ENCODE measurements at regions of chr15 and their contacts with region 1.

Region 1: GRCh38 chr15:91706322-91707032 is 147.0 kb upstream of the SLCO3A1 start:
- DNase-seq: peak; percentile 81
- H3K4me3 Mint-ChIP-seq: no peak overlapping the region
- H3K27ac Mint-ChIP-seq: no peak overlapping the region
- H3K4me1 Mint-ChIP-seq: peaks cover 15% of the 10 kb centered on the region
- H3K27me3 Mint-ChIP-seq: peaks cover 9% of the 10 kb centered on the region
- CTCF ChIP-seq: peak; percentile 80

Region 2: DNA sequence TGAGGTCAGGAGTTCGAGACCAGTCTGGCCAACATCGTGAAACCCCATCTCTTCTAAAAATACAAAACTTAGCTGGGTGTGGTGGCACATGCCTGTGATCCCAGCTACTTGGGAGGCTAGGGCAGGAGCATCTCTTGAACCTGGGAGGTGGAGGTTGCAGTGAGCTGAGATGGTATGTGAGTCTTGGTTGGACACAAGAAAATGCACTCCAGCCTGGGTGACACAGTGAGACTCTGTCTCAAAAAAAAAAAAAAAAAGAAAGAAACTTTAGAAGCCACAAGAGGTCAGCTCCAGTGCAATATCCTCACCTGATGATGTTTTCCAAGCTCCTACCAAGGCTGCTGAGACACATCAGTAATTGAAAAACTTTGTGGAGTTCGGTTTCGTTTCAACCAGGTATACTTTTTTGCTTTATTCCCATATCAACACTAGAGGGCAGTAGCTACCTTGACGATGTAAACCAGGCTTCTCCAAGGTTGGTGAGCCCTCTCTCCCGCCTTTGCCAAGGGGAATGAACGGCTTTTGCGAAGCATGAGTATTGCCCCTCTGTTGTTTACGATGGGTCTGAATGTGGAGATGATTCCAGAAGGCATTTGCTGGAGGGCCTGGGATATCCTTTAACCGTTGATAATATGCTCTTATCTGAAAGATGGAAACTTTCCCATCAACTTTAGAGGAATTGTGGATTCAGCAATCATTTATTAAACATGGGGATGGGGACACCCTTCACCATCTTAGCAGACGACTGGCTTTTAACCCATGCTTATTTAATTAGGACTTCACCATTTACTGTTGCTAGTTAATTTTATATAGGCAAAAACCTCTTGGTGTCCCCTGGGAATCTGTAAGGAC is 403.7 kb before region 1 on chr15:
- CTCF ChIA-PET with region 1: interaction called, 20 read pairs
- POLR2A ChIA-PET with region 1: interaction called, 3 read pairs
- intact Hi-C with region 1: loop called (anchors 10 kb)
- DNase-seq: peak; percentile 77
- H3K4me3 Mint-ChIP-seq: no peak overlapping the region
- H3K27ac Mint-ChIP-seq: no peak overlapping the region
- H3K4me1 Mint-ChIP-seq: no peaks in the 10 kb centered on the region
- H3K27me3 Mint-ChIP-seq: peaks cover 81% of the 10 kb centered on the region
- CTCF ChIP-seq: peak; percentile 75

Region 3: DNA sequence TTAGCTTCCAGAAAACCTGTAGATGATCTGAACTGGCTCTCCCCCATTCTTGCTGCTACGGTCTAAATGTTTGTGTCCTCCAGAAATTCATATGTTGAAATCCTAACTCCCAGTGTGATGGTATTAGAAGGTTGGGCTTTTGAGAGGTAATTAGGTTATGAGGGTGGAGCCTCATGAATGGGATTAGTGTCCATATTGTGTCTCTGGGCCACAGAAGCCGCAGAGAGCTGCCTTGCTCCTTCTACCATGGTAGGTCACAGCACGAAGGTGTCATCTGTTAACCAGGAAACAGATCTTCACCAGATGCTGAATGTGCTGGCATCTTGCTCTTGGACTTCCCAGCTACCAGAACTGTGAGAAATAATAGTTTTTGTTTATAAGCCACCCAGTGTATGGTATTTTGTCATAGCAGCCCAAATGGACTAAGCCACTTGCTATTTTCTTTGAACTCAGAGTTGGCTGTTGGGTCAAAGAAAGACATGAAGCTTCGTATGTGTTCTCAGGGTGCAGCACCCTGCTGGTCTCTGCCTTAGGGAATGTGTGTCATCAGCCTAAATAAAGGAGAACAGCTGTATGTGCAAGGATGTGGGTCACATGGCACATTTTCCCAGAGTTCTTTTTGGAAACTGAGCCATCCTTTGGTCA is 170.5 kb before region 1 on chr15:
- CTCF ChIA-PET with region 1: no interaction called
- POLR2A ChIA-PET with region 1: no interaction called
- intact Hi-C with region 1: loop called (anchors 10 kb)
- DNase-seq: peak; percentile 42
- H3K4me3 Mint-ChIP-seq: no peak overlapping the region
- H3K27ac Mint-ChIP-seq: no peak overlapping the region
- H3K4me1 Mint-ChIP-seq: peaks cover 6% of the 10 kb centered on the region
- H3K27me3 Mint-ChIP-seq: no peaks in the 10 kb centered on the region
- CTCF ChIP-seq: no peak

Region 4: DNA sequence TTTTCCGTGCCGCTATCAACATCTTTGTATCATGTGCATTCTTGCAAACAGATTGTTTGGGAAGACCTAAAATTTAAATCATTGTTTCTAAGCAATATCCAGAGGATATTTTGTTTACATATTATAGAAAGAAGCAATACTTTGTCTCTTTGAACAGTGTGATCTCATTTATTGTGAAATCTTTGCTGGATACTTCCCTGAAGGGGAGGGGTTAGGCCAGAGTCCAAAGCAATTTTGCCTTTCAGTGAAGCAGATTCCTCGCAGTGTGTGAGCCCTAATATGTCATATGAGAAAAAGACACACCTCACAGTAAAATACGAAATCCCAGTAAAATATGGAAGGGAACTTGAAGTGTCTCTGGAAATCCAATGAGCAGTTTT is 11.7 kb before region 1 on chr15:
- CTCF ChIA-PET with region 1: interaction called, 46 read pairs
- POLR2A ChIA-PET with region 1: interaction called, 4 read pairs
- intact Hi-C with region 1: no loop called
- DNase-seq: peak; percentile 78
- H3K4me3 Mint-ChIP-seq: peak overlapping the region; percentile 71
- H3K27ac Mint-ChIP-seq: peak overlapping the region; percentile 94
- H3K4me1 Mint-ChIP-seq: peaks cover 10% of the 10 kb centered on the region
- H3K27me3 Mint-ChIP-seq: no peaks in the 10 kb centered on the region
- CTCF ChIP-seq: no peak

Region 5: GRCh38 chr15:91717811-91718210 is 11.3 kb after region 1 on chr15:
- CTCF ChIA-PET with region 1: interaction called, 11 read pairs
- POLR2A ChIA-PET with region 1: no interaction called
- intact Hi-C with region 1: no loop called
- DNase-seq: no peak
- H3K4me3 Mint-ChIP-seq: no peak overlapping the region
- H3K27ac Mint-ChIP-seq: no peak overlapping the region
- H3K4me1 Mint-ChIP-seq: no peaks in the 10 kb centered on the region
- H3K27me3 Mint-ChIP-seq: peaks cover 65% of the 10 kb centered on the region
- CTCF ChIP-seq: no peak

Region 6: DNA sequence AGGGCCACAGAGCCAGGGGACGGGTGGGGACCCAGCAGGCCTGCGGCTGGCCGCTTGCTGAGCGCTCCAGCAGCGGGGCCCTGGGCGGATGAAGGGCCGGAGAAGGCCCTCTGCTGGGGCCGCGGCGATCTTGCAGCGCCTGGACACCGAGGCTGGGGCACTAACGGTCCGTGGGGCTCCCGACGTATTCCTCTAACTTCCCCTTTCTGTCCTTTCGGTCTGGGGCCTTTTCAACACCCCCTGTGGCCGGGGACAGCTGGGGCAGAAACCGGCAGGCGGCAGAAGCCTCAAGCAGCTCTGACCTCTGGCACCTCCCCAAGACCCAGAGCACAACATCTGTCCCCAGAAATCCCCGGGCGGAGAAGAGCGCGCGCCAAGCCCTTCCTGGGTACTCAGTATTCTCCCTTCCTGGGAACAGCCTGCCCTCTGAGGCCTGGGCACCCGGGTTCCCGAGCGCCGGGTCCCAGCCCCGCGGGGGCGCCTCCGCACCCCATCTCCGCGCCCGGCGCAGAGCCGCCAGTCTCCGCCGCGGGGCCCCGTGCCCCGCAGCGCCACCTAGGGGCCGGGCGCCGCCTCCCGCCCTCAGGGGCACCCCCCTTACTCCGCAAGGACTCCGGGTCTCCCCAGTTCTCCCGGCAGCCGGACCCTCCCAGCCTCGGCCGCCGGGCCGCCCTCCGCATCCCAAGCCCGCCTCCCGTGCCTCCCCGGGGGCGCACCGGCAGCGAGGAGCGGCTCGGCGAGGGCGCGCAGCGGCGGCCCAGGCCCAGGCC is 146.4 kb after region 1 on chr15:
- CTCF ChIA-PET with region 1: interaction called, 16 read pairs
- POLR2A ChIA-PET with region 1: interaction called, 7 read pairs
- intact Hi-C with region 1: loop called (anchors 5 kb)
- DNase-seq: peak; percentile 66
- H3K4me3 Mint-ChIP-seq: peak overlapping the region; percentile 75
- H3K27ac Mint-ChIP-seq: peak overlapping the region; percentile 61
- H3K4me1 Mint-ChIP-seq: peaks cover 42% of the 10 kb centered on the region
- H3K27me3 Mint-ChIP-seq: no peaks in the 10 kb centered on the region
- CTCF ChIP-seq: peak; percentile 78

Region 7: GRCh38 chr15:91965501-91966184 is 259.2 kb after region 1 on chr15:
- CTCF ChIA-PET with region 1: interaction called, 3 read pairs
- POLR2A ChIA-PET with region 1: no interaction called
- intact Hi-C with region 1: loop called (anchors 10 kb)
- DNase-seq: peak; percentile 98
- H3K4me3 Mint-ChIP-seq: peak overlapping the region; percentile 60
- H3K27ac Mint-ChIP-seq: peak overlapping the region; percentile 96
- H3K4me1 Mint-ChIP-seq: peaks cover 47% of the 10 kb centered on the region
- H3K27me3 Mint-ChIP-seq: no peaks in the 10 kb centered on the region
- CTCF ChIP-seq: no peak